CD14-positive monocyte (primary cell): ENCODE measurements at regions of chr6 and their contacts with region 1.

Region 1: GRCh38 chr6:5260661-5261544 is at the starts of genes FARS2 and LYRM4:
- DNase-seq: peak; percentile 81 to 87 (median 82)
- H3K4me3 ChIP-seq: peak within 1 kb of the TSS; percentile 83 to 99 (median 91)
- H3K4me3 Mint-ChIP-seq: peak within 1 kb of the TSS; percentile 95 to 98
- H3K27ac ChIP-seq: peak within 1 kb of the TSS; percentile 77 to 96
- H3K27ac Mint-ChIP-seq: peak within 1 kb of the TSS; percentile 97 to 100 (median 100)
- H3K4me1 ChIP-seq: peaks cover 17 to 21% of the 10 kb centered on the region in 2 donors
- H3K4me1 Mint-ChIP-seq: peaks cover 19% of the 10 kb centered on the region
- H3K27me3 ChIP-seq: no peaks in the 10 kb centered on the region
- H3K27me3 Mint-ChIP-seq: peaks cover 0 to 1% (median 0%) of the 10 kb centered on the region in 3 donors
- CTCF ChIP-seq: no peak
- polyA plus RNA-seq, gene FARS2: 12.2 to 21.6 (median 17.7) TPM
- polyA plus RNA-seq, gene LYRM4: 13.7 to 19.6 (median 18.1) TPM

Region 2: GRCh38 chr6:3592371-3592941 is 1668.4 kb before region 1 on chr6:
- intact Hi-C with region 1: loop called in 1 of 2 experiments (anchors 10 kb)
- DNase-seq: peak; percentile 85 to 95 (median 94)
- H3K4me3 ChIP-seq: no peak overlapping the region
- H3K4me3 Mint-ChIP-seq: no peak overlapping the region
- H3K27ac ChIP-seq: peak overlapping the region; percentile 46 to 74
- H3K27ac Mint-ChIP-seq: peak overlapping the region; percentile 66 to 91 (median 85)
- H3K4me1 ChIP-seq: peaks cover 9 to 14% of the 10 kb centered on the region in 2 donors
- H3K4me1 Mint-ChIP-seq: peaks cover 20% of the 10 kb centered on the region
- H3K27me3 ChIP-seq: no peaks in the 10 kb centered on the region
- H3K27me3 Mint-ChIP-seq: peaks cover 0 to 3% (median 0%) of the 10 kb centered on the region in 3 donors
- CTCF ChIP-seq: no peak

Region 3: DNA sequence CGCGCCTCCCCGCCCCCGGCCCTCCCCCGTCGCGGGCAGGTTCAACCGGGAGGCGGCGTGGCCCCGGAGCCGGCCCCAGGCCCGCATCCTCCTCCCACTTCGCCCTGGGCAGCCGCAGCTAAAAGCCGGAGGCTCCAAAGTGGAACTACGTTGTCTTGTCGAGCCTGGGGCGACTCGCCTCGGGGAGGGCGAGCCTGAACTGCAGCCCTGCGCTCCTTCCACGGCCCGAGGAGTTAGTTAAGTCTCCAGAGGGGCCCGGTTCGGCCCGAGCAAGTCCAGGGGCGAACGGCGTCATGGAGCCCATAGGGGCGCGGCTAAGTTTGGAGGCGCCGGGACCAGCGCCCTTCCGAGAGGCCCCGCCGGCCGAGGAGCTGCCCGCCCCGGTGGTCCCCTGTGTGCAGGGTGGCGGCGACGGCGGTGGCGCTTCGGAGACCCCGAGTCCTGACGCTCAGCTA is 175.7 kb before region 1 on chr6 and contains the start of gene PPP1R3G:
- intact Hi-C with region 1: loop called in 1 of 2 experiments (anchors 10 kb)
- DNase-seq: peak; percentile 40 to 46 (median 41)
- H3K4me3 ChIP-seq: peak within 1 kb of the TSS; percentile 40 to 77 (median 56)
- H3K4me3 Mint-ChIP-seq: peak within 1 kb of the TSS; percentile 91 to 97
- H3K27ac ChIP-seq: peak within 1 kb of the TSS; percentile 24 to 45
- H3K27ac Mint-ChIP-seq: peak within 1 kb of the TSS in 2 of 7 donors; percentile 42 to 76
- H3K4me1 ChIP-seq: peaks cover 41 to 69% of the 10 kb centered on the region in 2 donors
- H3K4me1 Mint-ChIP-seq: peaks cover 51% of the 10 kb centered on the region
- H3K27me3 ChIP-seq: peaks cover 5 to 23% of the 10 kb centered on the region in 2 donors
- H3K27me3 Mint-ChIP-seq: peaks cover 29 to 52% (median 37%) of the 10 kb centered on the region in 3 donors
- CTCF ChIP-seq: no peak
- polyA plus RNA-seq, gene PPP1R3G: 0.13 to 0.15 (median 0.13) TPM

Region 4: GRCh38 chr6:5435449-5435848 is 174.5 kb after region 1 on chr6:
- intact Hi-C with region 1: no loop called
- DNase-seq: no peak
- H3K4me3 ChIP-seq: no peak overlapping the region
- H3K4me3 Mint-ChIP-seq: no peak overlapping the region
- H3K27ac ChIP-seq: no peak overlapping the region
- H3K27ac Mint-ChIP-seq: no peak overlapping the region
- H3K4me1 ChIP-seq: no peaks in the 10 kb centered on the region
- H3K4me1 Mint-ChIP-seq: peaks cover 6% of the 10 kb centered on the region
- H3K27me3 ChIP-seq: no peaks in the 10 kb centered on the region
- H3K27me3 Mint-ChIP-seq: no peaks in the 10 kb centered on the region
- CTCF ChIP-seq: no peak